Aorta (tissue), 5 donors: ENCODE measurements at regions of chr13 and their contacts with region 1.

Region 1: DNA sequence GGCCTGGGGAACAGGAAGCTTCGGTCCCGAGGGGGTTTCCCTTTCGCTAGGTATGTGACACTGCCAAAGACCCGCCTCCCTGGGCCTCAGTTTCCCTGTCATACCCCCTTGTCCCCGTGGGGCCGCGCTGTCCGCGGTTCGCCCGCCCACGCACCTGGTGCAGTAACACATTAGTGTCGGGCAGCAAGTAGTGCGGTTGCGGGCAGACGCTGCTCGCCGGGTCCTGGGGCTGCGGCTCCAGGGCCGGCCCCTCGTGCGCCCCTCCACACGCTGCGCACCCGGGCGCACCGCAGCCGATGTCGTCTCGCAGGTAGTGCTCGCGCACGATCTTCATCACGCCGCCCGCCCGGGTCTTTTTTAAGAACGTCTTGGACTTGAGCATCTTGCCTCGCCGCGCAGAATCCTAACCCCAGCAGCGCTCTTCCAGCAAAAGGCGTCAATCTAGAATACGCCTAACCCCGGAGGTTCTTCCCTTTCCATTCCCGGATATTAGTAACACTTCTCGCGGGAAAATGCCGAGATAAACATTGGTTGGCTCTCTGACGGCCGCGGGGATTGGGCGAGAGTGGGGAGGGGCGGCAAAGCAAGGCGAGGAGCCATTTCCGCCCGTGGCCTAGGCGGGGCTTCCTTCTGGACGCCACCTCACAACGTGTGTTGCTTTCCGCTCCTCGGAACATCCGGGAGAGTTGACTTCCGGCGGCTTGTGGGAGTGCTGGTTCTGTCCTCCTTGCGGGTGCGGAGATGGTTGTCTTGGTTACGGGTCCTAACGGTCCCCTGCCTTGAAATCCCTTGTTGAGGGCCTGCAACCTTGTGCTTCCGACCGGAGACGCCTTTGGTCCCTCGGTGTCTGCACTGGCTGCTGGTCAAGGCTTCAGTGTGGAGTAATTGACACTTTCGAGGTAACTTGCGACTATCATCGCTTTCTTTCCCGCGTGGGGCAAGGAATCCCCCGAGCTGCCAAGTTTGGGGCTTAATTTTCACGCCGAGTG is at the starts of genes DIS3 and PIBF1:
- DNase-seq: peak; percentile 98 to 99
- ATAC-seq: peak; percentile 100
- H3K4me3 ChIP-seq: peak within 1 kb of the TSS; percentile 73 to 96
- H3K27ac ChIP-seq: peak within 1 kb of the TSS; percentile 31 to 71
- H3K4me1 ChIP-seq: peaks cover 1 to 6% of the 10 kb centered on the region in 2 donors
- H3K27me3 ChIP-seq: no peaks in the 10 kb centered on the region
- total RNA-seq, gene DIS3: 26.0 to 27.8 TPM
- total RNA-seq, gene PIBF1: 25.1 to 29.4 TPM

Region 2: GRCh38 chr13:72727417-72728289 is 54.1 kb before region 1 on chr13 and contains the starts of genes BORA and MZT1:
- intact Hi-C with region 1: loop called in 1 of 2 experiments (anchors 5 kb)
- DNase-seq: peak; percentile 97 to 98
- ATAC-seq: peak; percentile 100
- H3K4me3 ChIP-seq: peak within 1 kb of the TSS; percentile 65 to 98
- H3K27ac ChIP-seq: peak within 1 kb of the TSS in 1 of 2 donors; percentile 39
- H3K4me1 ChIP-seq: no peaks in the 10 kb centered on the region
- H3K27me3 ChIP-seq: no peaks in the 10 kb centered on the region
- total RNA-seq, gene BORA: 1.5 to 2.6 TPM
- total RNA-seq, gene MZT1: 7.4 to 9.4 TPM